Cardiac septum (tissue), 1 donor: ENCODE measurements at regions of chr11 and their contacts with region 1.

Region 1: GRCh38 chr11:72030472-72031045 is 31.9 kb downstream of the IL18BP start:
- DNase-seq: no peak

Region 2: GRCh38 chr11:72091005-72091691 is 60.6 kb after region 1 on chr11:
- intact Hi-C with region 1: loop called (anchors 1 kb)
- DNase-seq: peak; percentile 87

Region 3: DNA sequence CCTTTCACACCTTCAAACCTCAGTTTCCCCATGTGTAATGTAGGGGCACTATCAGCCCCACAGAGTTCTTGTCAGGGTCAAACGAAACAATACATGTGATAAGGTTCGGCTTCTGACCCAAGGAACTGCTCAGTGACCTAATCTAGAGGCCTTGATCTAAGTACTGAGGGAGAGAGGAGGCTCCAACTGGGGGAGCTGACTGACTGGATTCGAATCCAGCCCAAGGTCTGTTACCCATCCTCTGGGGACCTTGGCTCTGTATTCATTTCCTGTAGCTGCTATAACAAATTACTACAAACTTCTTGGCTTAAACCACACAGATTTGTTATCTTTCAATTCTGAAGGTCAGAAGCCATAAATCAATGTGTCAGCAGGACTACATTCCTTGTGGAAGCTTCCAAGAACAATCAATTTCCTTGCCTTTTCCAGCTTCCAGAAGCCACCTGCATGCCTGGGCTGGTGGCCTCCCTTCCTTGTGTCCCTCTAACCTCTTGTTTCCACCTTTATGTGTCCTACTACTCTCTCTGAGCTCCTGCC is 92.6 kb after region 1 on chr11:
- intact Hi-C with region 1: no loop called
- DNase-seq: no peak

Region 4: GRCh38 chr11:72141066-72141465 is 110.5 kb after region 1 on chr11:
- intact Hi-C with region 1: loop called (anchors 5 kb)
- DNase-seq: no peak